ENCODE measurements at regions of chr9 and their contacts with region 1.

Region 1: GRCh38 chr9:116860509-116861120 is 173.5 kb downstream of the TRIM32 start:
- DNase-seq: peak; percentile 69 to 81 (median 71)
- ATAC-seq: peak; percentile 81
- H3K4me3 ChIP-seq: no peak overlapping the region
- H3K27ac ChIP-seq: no peak overlapping the region
- H3K4me1 ChIP-seq: no peaks in the 10 kb centered on the region
- H3K27me3 ChIP-seq: no peaks in the 10 kb centered on the region
- CTCF ChIP-seq: peak; percentile 33 to 75 (median 64)
- POLR2A ChIP-seq: no peak

Region 2: DNA sequence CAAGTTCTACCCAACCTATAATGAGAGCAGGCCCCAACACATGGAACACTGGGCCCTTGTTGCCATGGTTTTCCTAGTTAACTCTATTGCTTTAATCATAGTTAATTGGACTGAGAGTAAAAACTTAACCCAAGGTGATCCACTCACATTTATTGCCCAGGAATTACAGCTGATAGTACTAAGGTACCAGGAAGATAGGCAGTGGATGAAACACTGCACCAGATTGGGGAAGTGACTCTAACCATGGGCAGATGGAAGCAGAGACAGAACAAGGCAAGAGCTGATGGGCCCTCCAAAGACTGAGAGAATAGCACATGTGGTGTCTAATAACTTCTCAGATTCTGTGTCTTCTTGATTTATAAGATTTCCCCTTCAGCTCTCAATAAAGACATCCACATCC is 319.2 kb before region 1 on chr9:
- intact Hi-C with region 1: no loop called
- DNase-seq: no peak
- ATAC-seq: no peak
- H3K4me3 ChIP-seq: no peak overlapping the region
- H3K27ac ChIP-seq: no peak overlapping the region
- H3K4me1 ChIP-seq: no peaks in the 10 kb centered on the region
- H3K27me3 ChIP-seq: no peaks in the 10 kb centered on the region
- CTCF ChIP-seq: no peak
- POLR2A ChIP-seq: no peak

Region 3: GRCh38 chr9:116928884-116929283 is 68.3 kb after region 1 on chr9:
- intact Hi-C with region 1: loop called (anchors 10 kb)
- DNase-seq: no peak
- ATAC-seq: no peak
- H3K4me3 ChIP-seq: no peak overlapping the region
- H3K27ac ChIP-seq: no peak overlapping the region
- H3K4me1 ChIP-seq: no peaks in the 10 kb centered on the region
- H3K27me3 ChIP-seq: no peaks in the 10 kb centered on the region
- CTCF ChIP-seq: no peak
- POLR2A ChIP-seq: no peak

Region 4: GRCh38 chr9:116998305-116998704 is 137.7 kb after region 1 on chr9:
- intact Hi-C with region 1: no loop called
- DNase-seq: no peak
- ATAC-seq: no peak
- H3K4me3 ChIP-seq: no peak overlapping the region
- H3K27ac ChIP-seq: no peak overlapping the region
- H3K4me1 ChIP-seq: no peaks in the 10 kb centered on the region
- H3K27me3 ChIP-seq: no peaks in the 10 kb centered on the region
- CTCF ChIP-seq: no peak
- POLR2A ChIP-seq: no peak

Region 5: GRCh38 chr9:117153021-117153420 is 292.4 kb after region 1 on chr9:
- intact Hi-C with region 1: no loop called
- DNase-seq: no peak
- ATAC-seq: no peak
- H3K4me3 ChIP-seq: no peak overlapping the region
- H3K27ac ChIP-seq: no peak overlapping the region
- H3K4me1 ChIP-seq: no peaks in the 10 kb centered on the region
- H3K27me3 ChIP-seq: no peaks in the 10 kb centered on the region
- CTCF ChIP-seq: no peak
- POLR2A ChIP-seq: no peak

Measured in body of pancreas (tissue), 4 donors.